CD4-positive, alpha-beta T cell (primary cell): ENCODE measurements at regions of chr11 and their contacts with region 1.

Region 1: DNA sequence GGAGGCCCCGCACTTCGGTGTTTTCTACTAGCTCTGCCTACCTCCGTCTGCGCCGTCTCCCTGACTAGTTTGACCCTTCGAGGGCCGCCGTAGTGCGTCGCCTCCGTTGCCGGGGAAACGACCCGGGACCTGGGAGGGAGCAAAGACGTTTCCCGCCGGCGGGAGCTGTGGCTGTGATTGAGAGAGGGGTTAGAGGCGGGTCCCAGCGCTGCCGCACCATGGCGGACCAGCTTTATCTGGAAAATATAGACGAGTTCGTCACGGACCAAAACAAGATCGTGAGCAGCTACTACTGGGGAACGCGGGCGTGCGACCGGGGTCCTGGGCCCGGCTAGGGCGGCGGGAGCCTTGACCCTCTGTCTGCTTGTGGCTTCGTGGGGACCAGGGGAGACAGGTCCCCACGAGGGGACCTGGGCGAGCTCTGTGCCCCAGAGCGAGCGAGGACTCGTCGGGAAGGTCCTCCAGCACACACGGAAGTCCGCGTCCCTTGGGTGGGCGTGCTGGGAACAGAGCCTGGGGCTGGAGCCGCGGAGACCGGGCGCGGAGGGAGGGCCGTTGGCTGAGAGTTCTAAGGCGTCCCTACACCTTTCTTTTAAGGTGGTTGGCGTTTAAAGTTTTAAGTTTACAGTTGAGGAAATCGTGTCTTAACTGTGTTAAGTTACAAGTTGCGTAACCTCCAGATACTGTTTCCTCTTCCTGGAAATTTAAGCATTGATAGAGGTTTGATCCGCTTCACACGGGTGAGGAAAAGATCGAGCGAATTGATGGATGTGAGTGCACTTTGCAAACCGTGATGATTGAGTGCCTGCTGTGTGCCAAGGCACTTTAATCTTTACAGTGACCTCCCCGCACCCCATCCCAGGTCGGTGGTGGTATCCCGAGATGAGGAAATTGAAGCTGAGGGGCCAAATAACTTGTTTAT is at the start of gene POLD3:
- DNase-seq: peak; percentile 91 to 96 (median 94)
- ATAC-seq: peak; percentile 97
- H3K4me3 ChIP-seq: peak within 1 kb of the TSS; percentile 84
- H3K4me3 Mint-ChIP-seq: peak within 1 kb of the TSS; percentile 97
- H3K27ac ChIP-seq: peak within 1 kb of the TSS; percentile 85 to 90
- H3K27ac Mint-ChIP-seq: peak within 1 kb of the TSS; percentile 92
- H3K4me1 ChIP-seq: peaks cover 13% of the 10 kb centered on the region
- H3K4me1 Mint-ChIP-seq: peaks cover 28% of the 10 kb centered on the region
- H3K27me3 ChIP-seq: no peaks in the 10 kb centered on the region
- H3K27me3 Mint-ChIP-seq: no peaks in the 10 kb centered on the region
- CTCF ChIP-seq: no peak
- total RNA-seq, gene POLD3: 4.6 to 5.2 TPM

Region 2: GRCh38 chr11:73779084-73779902 is 813.4 kb before region 1 on chr11:
- CTCF ChIA-PET with region 1: no interaction called
- POLR2A ChIA-PET with region 1: no interaction called
- intact Hi-C with region 1: loop called in 1 of 2 experiments (anchors 5 kb)
- DNase-seq: peak; percentile 95 to 99 (median 97)
- ATAC-seq: peak; percentile 95
- H3K4me3 ChIP-seq: peak overlapping the region; percentile 78
- H3K4me3 Mint-ChIP-seq: peak overlapping the region; percentile 95
- H3K27ac ChIP-seq: peak overlapping the region; percentile 95 to 99
- H3K27ac Mint-ChIP-seq: peak overlapping the region; percentile 99
- H3K4me1 ChIP-seq: peaks cover 13% of the 10 kb centered on the region
- H3K4me1 Mint-ChIP-seq: peaks cover 14% of the 10 kb centered on the region
- H3K27me3 ChIP-seq: no peaks in the 10 kb centered on the region
- H3K27me3 Mint-ChIP-seq: no peaks in the 10 kb centered on the region
- CTCF ChIP-seq: no peak

Region 3: DNA sequence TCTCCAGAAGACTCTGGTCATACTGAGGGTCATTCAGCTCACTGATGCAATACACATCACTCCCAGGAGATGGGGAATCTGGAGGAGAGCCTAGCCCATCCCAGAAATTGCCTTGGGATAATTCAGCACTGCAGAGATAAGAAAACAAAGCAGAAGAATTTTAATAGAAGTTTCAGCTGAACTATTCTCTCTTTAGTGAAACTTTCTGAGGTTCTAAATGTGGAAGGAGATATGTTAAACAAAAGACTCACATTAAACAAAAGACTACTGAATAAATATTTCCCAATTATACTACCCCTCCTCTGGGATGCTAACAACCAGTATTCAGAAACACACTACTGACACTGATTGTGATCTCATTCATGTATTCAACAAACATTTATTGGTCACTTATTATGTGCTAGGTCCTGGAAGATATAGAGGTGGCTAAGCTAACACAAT is 469.7 kb before region 1 on chr11:
- CTCF ChIA-PET with region 1: no interaction called
- POLR2A ChIA-PET with region 1: no interaction called
- intact Hi-C with region 1: no loop called
- DNase-seq: no peak
- ATAC-seq: no peak
- H3K4me3 ChIP-seq: no peak overlapping the region
- H3K4me3 Mint-ChIP-seq: no peak overlapping the region
- H3K27ac ChIP-seq: no peak overlapping the region
- H3K27ac Mint-ChIP-seq: no peak overlapping the region
- H3K4me1 ChIP-seq: no peaks in the 10 kb centered on the region
- H3K4me1 Mint-ChIP-seq: no peaks in the 10 kb centered on the region
- H3K27me3 ChIP-seq: no peaks in the 10 kb centered on the region
- H3K27me3 Mint-ChIP-seq: no peaks in the 10 kb centered on the region
- CTCF ChIP-seq: no peak

Region 4: DNA sequence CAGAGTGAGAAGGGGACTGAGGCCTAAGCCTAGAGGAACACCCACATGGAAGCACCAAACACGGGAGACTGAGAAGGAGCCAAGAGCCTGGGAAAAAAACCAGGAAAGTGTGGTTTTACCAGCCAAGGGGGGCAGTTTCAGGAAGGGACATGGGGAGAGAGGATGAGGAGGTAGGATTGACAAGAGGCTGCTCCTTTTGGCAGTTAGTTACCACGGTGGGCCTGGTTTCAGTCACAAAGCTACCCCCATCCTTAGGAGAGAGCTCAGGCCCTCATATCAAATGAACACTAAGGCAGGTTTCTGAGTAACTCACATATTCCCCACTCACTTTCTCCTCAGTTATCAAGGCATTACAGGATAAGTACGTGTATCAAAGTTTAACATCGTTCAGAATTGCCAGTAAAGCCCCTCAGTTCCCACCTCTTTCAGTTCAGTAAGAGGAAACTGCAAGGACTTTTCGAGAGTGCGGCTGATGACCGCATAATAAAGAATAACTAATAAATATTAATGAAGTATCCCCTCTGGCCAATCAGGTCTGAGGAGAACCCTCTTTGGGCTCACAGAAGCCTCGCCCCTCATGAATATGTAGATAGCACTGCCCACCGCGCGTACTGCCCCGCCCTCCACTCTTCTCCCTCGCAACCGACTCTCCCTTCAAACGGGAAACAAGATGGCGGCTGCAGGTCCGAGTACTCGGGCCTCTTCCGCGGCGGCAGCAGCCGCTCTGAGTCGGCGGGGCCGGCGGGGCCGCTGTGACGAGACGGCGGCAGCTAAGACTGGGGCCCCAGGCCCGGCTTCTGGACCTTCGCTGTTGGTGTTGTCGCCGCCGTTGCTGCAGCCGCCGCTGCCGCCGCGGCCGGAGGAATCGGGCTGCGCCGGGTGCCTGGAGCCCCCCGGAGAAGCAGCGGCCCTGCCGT is 155.8 kb after region 1 on chr11 and contains the start of gene RNF169:
- CTCF ChIA-PET with region 1: interaction called, 3 read pairs
- POLR2A ChIA-PET with region 1: no interaction called
- intact Hi-C with region 1: loop called in 1 of 2 experiments (anchors 5 kb)
- DNase-seq: peak; percentile 79 to 96 (median 84)
- ATAC-seq: peak; percentile 98
- H3K4me3 ChIP-seq: peak within 1 kb of the TSS; percentile 62
- H3K4me3 Mint-ChIP-seq: peak within 1 kb of the TSS; percentile 99
- H3K27ac ChIP-seq: peak within 1 kb of the TSS; percentile 63 to 76
- H3K27ac Mint-ChIP-seq: peak within 1 kb of the TSS; percentile 78
- H3K4me1 ChIP-seq: peaks cover 33% of the 10 kb centered on the region
- H3K4me1 Mint-ChIP-seq: peaks cover 49% of the 10 kb centered on the region
- H3K27me3 ChIP-seq: no peaks in the 10 kb centered on the region
- H3K27me3 Mint-ChIP-seq: no peaks in the 10 kb centered on the region
- CTCF ChIP-seq: no peak
- total RNA-seq, gene RNF169: 15.2 to 15.5 TPM

Region 5: GRCh38 chr11:76371170-76371569 is 1778.5 kb after region 1 on chr11:
- CTCF ChIA-PET with region 1: no interaction called
- POLR2A ChIA-PET with region 1: no interaction called
- intact Hi-C with region 1: loop called in 1 of 2 experiments (anchors 10 kb)
- DNase-seq: peak in 3 of 14 experiments; percentile 23 to 40 (median 39)
- ATAC-seq: no peak
- H3K4me3 ChIP-seq: no peak overlapping the region
- H3K4me3 Mint-ChIP-seq: no peak overlapping the region
- H3K27ac ChIP-seq: no peak overlapping the region
- H3K27ac Mint-ChIP-seq: no peak overlapping the region
- H3K4me1 ChIP-seq: peaks cover 19% of the 10 kb centered on the region
- H3K4me1 Mint-ChIP-seq: peaks cover 67% of the 10 kb centered on the region
- H3K27me3 ChIP-seq: no peaks in the 10 kb centered on the region
- H3K27me3 Mint-ChIP-seq: no peaks in the 10 kb centered on the region
- CTCF ChIP-seq: no peak